ENCODE measurements at regions of chr16 and their contacts with region 1.

Region 1: DNA sequence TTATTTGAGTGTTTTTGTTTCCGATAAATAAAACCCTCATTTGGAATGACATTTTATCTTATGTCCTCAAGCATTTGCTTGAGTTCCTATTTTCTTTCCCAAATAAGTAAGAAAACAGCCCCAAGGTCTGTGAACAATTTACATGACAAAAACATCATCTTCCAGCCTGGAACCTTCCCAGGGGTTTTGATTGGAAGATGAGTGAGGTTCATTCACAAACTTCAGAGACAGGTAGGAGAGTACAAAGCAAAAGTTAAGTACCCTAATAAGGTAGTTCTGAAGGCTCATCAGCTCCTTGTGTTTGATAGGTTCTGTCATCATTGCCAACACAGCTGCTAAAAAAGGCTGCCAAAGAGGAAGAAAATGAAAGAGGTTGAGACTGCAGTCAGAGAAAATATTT is 772.8 kb downstream of the CDH8 start:
- DNase-seq: no peak
- ATAC-seq: no peak
- H3K4me3 ChIP-seq: no peak overlapping the region
- H3K27ac ChIP-seq: no peak overlapping the region
- H3K4me1 ChIP-seq: no peaks in the 10 kb centered on the region
- H3K27me3 ChIP-seq: no peaks in the 10 kb centered on the region
- CTCF ChIP-seq: no peak
- POLR2A ChIP-seq: no peak
- RAD21 ChIP-seq: no peak

Region 2: DNA sequence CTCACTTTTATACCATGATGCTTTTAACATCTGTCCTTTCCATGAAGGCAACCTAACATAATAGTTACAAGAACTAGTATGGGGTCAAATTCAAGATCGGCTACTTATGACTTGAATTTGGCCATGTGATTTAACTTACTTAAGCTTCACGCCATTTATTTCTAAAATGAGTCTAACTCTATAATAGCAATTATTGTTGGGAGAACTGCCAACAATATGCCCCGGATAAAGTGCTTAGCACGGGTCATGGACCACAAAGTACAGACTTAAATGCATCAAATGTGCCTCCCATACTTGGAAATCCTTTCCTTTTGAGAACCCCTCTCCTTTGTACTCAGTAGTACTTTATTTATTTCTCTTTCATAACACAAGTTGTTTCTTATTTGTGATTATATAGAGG is 925.7 kb before region 1 on chr16:
- CTCF ChIA-PET with region 1: no interaction called
- POLR2A ChIA-PET with region 1: no interaction called
- dilution Hi-C with region 1: no loop called
- in situ Hi-C with region 1: no loop called
- intact Hi-C with region 1: loop called (anchors 5 kb)
- DNase-seq: no peak
- ATAC-seq: no peak
- H3K4me3 ChIP-seq: no peak overlapping the region
- H3K27ac ChIP-seq: no peak overlapping the region
- H3K4me1 ChIP-seq: no peaks in the 10 kb centered on the region
- H3K27me3 ChIP-seq: no peaks in the 10 kb centered on the region
- CTCF ChIP-seq: no peak
- POLR2A ChIP-seq: no peak
- RAD21 ChIP-seq: no peak

Measured in IMR-90 (cell line).